BJ (cell line): ENCODE measurements at regions of chr10 and their contacts with region 1.

Region 1: DNA sequence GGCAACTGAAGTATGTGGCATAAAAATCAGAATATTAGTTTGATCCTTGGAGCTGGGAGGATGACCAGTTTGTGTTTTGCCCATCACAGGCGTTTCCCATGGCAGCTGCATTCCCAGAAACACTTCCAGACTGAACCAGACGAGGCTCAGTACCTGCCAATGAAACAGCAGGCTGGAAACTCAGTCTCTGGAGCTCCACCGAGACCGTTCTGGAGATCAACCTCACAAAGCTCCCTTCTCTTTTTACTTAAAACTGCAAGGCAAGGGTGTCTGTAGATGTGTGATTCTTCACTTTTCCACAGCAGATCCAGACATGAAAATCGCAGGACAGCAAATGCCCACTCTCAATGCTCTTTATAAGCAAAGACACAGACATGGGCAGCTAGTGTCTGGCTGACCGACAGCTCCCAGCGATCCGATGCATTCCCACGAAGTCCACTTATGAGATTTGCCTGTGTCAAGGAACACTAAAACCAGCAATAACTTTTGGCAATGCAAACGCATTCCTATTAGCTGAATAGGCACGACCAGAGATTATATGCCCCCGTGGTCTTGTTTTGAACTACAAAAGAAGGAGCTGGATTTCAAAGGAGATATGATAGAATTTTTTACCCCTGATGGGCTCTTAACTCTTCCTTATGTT is 72.7 kb downstream of the ADAM12 start:
- DNase-seq: peak; percentile 43
- H3K4me3 ChIP-seq: no peak overlapping the region
- H3K27me3 ChIP-seq: no peaks in the 10 kb centered on the region
- CTCF ChIP-seq: no peak

Region 2: GRCh38 chr10:126160971-126161659 is 154.5 kb before region 1 on chr10:
- CTCF ChIA-PET with region 1: no interaction called
- POLR2A ChIA-PET with region 1: no interaction called
- DNase-seq: no peak
- H3K4me3 ChIP-seq: no peak overlapping the region
- H3K27me3 ChIP-seq: no peaks in the 10 kb centered on the region
- CTCF ChIP-seq: 0 out of 2 replicates have a peak, but pooled peaks have one; percentile 16

Region 3: GRCh38 chr10:126326821-126327311 is 11.3 kb after region 1 on chr10:
- CTCF ChIA-PET with region 1: interaction called, 14 read pairs
- POLR2A ChIA-PET with region 1: no interaction called
- DNase-seq: no peak
- H3K4me3 ChIP-seq: no peak overlapping the region
- H3K27me3 ChIP-seq: no peaks in the 10 kb centered on the region
- CTCF ChIP-seq: no peak

Region 4: GRCh38 chr10:126350216-126350992 is 34.8 kb after region 1 on chr10:
- CTCF ChIA-PET with region 1: no interaction called
- POLR2A ChIA-PET with region 1: no interaction called
- DNase-seq: peak; percentile 58
- H3K4me3 ChIP-seq: no peak overlapping the region
- H3K27me3 ChIP-seq: no peaks in the 10 kb centered on the region
- CTCF ChIP-seq: no peak

Region 5: GRCh38 chr10:126421754-126422394 is 106.3 kb after region 1 on chr10:
- CTCF ChIA-PET with region 1: no interaction called
- POLR2A ChIA-PET with region 1: no interaction called
- DNase-seq: peak; percentile 86
- H3K4me3 ChIP-seq: no peak overlapping the region
- H3K27me3 ChIP-seq: no peaks in the 10 kb centered on the region
- CTCF ChIP-seq: no peak